ENCODE measurements at regions of chrX and their contacts with region 1.

Region 1: DNA sequence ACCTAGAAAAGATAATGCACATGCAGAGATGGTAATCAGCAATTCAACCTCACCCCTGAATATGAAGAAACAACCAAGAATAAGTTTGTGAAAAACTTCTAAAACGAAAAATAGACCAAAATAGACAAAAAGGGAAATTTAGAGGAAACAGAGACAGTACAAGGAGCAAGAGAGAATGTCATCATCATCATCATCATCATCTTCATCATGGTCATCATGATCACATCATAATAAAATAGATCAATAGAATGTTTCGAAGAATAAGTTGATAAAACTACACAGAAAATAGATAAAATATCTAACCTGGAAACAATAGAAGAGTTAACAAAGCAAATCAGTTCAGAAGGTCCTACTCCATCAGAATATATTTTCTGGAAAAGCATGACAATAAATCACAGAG is 67.3 kb upstream of the PRR32 start:
- DNase-seq: no peak
- H3K4me3 ChIP-seq: no peak overlapping the region
- H3K27ac ChIP-seq: no peak overlapping the region
- H3K4me1 ChIP-seq: no peaks in the 10 kb centered on the region
- H3K27me3 ChIP-seq: no peaks in the 10 kb centered on the region
- CTCF ChIP-seq: no peak

Region 2: DNA sequence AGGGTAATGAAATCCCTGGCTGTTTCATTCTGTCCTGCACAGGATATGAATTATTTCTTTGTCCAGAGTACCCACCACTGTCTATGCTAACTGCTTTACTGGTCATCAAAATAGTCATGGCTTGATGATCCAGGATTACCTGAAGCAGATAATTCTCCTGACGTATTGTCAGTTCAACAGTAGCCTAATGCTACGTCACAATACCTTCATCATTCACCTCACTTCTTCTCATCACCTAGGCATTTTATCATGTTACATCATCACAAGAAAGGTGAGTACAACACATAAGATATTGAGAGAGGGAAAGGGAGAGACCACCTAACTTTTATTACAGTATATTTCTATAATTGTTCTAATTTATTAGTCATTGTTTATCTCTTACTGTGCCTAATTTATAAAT is 101.8 kb before region 1 on chrX:
- CTCF ChIA-PET with region 1: no interaction called
- POLR2A ChIA-PET with region 1: no interaction called
- intact Hi-C with region 1: no loop called
- DNase-seq: no peak
- H3K4me3 ChIP-seq: no peak overlapping the region
- H3K27ac ChIP-seq: no peak overlapping the region
- H3K4me1 ChIP-seq: no peaks in the 10 kb centered on the region
- H3K27me3 ChIP-seq: no peaks in the 10 kb centered on the region
- CTCF ChIP-seq: no peak

Region 3: GRCh38 chrX:126785539-126785938 is 33.3 kb after region 1 on chrX:
- CTCF ChIA-PET with region 1: no interaction called
- POLR2A ChIA-PET with region 1: no interaction called
- intact Hi-C with region 1: loop called (anchors 2 kb)
- DNase-seq: no peak
- H3K4me3 ChIP-seq: no peak overlapping the region
- H3K27ac ChIP-seq: no peak overlapping the region
- H3K4me1 ChIP-seq: no peaks in the 10 kb centered on the region
- H3K27me3 ChIP-seq: no peaks in the 10 kb centered on the region
- CTCF ChIP-seq: no peak

Measured in PC-9 (cell line).